ENCODE measurements at regions of chr16 and their contacts with region 1.

Region 1: GRCh38 chr16:57591086-57591869 is 37.2 kb upstream of the ADGRG1 start:
- DNase-seq: peak; percentile 69 to 83
- ATAC-seq: peak; percentile 61 to 79 (median 63)
- H3K4me3 ChIP-seq: peak overlapping the region; percentile 19
- H3K4me3 Mint-ChIP-seq: peak overlapping the region; percentile 82
- H3K27ac ChIP-seq: peak overlapping the region; percentile 89
- H3K27ac Mint-ChIP-seq: peak overlapping the region; percentile 94 to 97
- H3K4me1 ChIP-seq: peaks cover 81% of the 10 kb centered on the region
- H3K4me1 Mint-ChIP-seq: peaks cover 80 to 87% of the 10 kb centered on the region in 2 donors
- H3K27me3 ChIP-seq: no peaks in the 10 kb centered on the region
- H3K27me3 Mint-ChIP-seq: no peaks in the 10 kb centered on the region
- CTCF ChIP-seq: peak; percentile 81

Region 2: GRCh38 chr16:57530104-57530521 is 61.2 kb before region 1 on chr16:
- intact Hi-C with region 1: loop called (anchors 5 kb)
- DNase-seq: peak; percentile 75 to 86
- ATAC-seq: peak; percentile 92 to 95 (median 94)
- H3K4me3 ChIP-seq: no peak overlapping the region
- H3K4me3 Mint-ChIP-seq: peak overlapping the region; percentile 92
- H3K27ac ChIP-seq: peak overlapping the region; percentile 92
- H3K27ac Mint-ChIP-seq: peak overlapping the region; percentile 99
- H3K4me1 ChIP-seq: peaks cover 77% of the 10 kb centered on the region
- H3K4me1 Mint-ChIP-seq: peaks cover 59 to 60% of the 10 kb centered on the region in 2 donors
- H3K27me3 ChIP-seq: no peaks in the 10 kb centered on the region
- H3K27me3 Mint-ChIP-seq: no peaks in the 10 kb centered on the region
- CTCF ChIP-seq: no peak

Region 3: DNA sequence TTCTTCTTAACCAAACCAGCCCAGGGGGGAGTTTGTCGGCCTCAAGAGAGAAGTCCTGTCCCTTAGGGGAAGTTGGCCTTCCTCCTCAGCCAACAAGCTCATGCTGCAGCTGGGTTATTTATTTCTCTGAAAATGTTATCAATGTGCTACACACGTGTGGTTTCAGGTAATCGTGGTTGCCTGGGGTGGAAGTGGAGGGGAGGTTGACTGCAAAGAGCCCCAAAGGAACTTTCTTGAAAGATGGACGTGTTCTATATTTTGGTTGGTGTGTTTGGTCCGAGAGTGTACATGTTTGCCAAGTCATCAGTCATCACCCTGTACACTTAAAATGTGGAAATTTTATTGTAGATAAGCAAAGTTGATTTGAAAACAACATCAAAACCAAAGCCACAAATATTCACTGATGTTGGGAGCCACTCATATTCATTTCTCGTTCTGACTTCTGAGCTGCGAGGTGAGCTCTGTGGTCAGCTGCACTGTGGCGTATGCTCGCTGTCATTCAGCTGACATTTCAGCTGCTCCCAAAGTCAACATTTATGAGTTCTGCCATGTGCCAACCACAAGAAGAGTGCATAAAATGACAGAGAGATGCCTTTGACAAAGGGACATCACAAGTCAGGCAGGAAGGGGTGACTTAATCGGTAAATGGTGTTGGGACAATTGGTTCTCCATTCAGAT is 10.7 kb after region 1 on chr16:
- intact Hi-C with region 1: loop called (anchors 1 kb)
- DNase-seq: peak; percentile 50 to 84
- ATAC-seq: peak; percentile 75 to 85 (median 84)
- H3K4me3 ChIP-seq: no peak overlapping the region
- H3K4me3 Mint-ChIP-seq: peak overlapping the region; percentile 72
- H3K27ac ChIP-seq: peak overlapping the region; percentile 94
- H3K27ac Mint-ChIP-seq: peak overlapping the region; percentile 80 to 94
- H3K4me1 ChIP-seq: peaks cover 68% of the 10 kb centered on the region
- H3K4me1 Mint-ChIP-seq: peaks cover 80 to 84% of the 10 kb centered on the region in 2 donors
- H3K27me3 ChIP-seq: no peaks in the 10 kb centered on the region
- H3K27me3 Mint-ChIP-seq: no peaks in the 10 kb centered on the region
- CTCF ChIP-seq: no peak

Region 4: GRCh38 chr16:57609541-57610401 is 18.5 kb after region 1 on chr16:
- intact Hi-C with region 1: loop called (anchors 2 kb)
- DNase-seq: peak; percentile 57 to 80
- ATAC-seq: peak; percentile 90 to 95 (median 93)
- H3K4me3 ChIP-seq: no peak overlapping the region
- H3K4me3 Mint-ChIP-seq: peak overlapping the region; percentile 80
- H3K27ac ChIP-seq: peak overlapping the region; percentile 80
- H3K27ac Mint-ChIP-seq: peak overlapping the region; percentile 80 to 94
- H3K4me1 ChIP-seq: peaks cover 60% of the 10 kb centered on the region
- H3K4me1 Mint-ChIP-seq: peaks cover 67 to 73% of the 10 kb centered on the region in 2 donors
- H3K27me3 ChIP-seq: no peaks in the 10 kb centered on the region
- H3K27me3 Mint-ChIP-seq: no peaks in the 10 kb centered on the region
- CTCF ChIP-seq: no peak

Region 5: DNA sequence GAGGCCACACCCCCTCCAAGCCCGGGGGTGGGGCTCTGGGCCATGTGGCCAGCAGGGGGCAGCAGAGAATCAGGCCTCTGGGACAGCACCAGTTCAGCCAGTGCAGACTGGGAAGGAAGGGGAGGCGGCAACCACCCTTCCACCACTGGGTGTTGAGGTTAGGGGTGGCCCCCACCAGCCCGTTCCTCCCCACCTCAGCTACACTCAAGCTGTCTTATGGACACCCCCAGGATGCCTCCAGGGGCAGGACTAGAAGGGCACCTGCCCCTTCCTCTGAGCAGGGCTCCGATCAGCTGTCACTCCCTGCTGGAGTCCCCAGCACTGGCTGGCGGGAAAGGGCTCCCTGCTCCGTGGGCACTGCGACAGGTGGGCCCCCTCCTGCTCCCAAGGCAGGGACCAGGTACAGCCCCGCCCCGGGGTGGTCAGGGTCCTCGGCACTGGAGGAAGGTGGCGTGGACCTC is 166.1 kb after region 1 on chr16:
- intact Hi-C with region 1: no loop called
- DNase-seq: peak; percentile 90 to 96
- ATAC-seq: peak; percentile 93 to 96 (median 94)
- H3K4me3 ChIP-seq: no peak overlapping the region
- H3K4me3 Mint-ChIP-seq: no peak overlapping the region
- H3K27ac ChIP-seq: peak overlapping the region; percentile 48
- H3K27ac Mint-ChIP-seq: peak overlapping the region; percentile 22 to 46
- H3K4me1 ChIP-seq: peaks cover 30% of the 10 kb centered on the region
- H3K4me1 Mint-ChIP-seq: peaks cover 4 to 7% of the 10 kb centered on the region in 2 donors
- H3K27me3 ChIP-seq: no peaks in the 10 kb centered on the region
- H3K27me3 Mint-ChIP-seq: no peaks in the 10 kb centered on the region
- CTCF ChIP-seq: peak; percentile 91